ENCODE measurements at regions of chr9 and their contacts with region 1.

Region 1: DNA sequence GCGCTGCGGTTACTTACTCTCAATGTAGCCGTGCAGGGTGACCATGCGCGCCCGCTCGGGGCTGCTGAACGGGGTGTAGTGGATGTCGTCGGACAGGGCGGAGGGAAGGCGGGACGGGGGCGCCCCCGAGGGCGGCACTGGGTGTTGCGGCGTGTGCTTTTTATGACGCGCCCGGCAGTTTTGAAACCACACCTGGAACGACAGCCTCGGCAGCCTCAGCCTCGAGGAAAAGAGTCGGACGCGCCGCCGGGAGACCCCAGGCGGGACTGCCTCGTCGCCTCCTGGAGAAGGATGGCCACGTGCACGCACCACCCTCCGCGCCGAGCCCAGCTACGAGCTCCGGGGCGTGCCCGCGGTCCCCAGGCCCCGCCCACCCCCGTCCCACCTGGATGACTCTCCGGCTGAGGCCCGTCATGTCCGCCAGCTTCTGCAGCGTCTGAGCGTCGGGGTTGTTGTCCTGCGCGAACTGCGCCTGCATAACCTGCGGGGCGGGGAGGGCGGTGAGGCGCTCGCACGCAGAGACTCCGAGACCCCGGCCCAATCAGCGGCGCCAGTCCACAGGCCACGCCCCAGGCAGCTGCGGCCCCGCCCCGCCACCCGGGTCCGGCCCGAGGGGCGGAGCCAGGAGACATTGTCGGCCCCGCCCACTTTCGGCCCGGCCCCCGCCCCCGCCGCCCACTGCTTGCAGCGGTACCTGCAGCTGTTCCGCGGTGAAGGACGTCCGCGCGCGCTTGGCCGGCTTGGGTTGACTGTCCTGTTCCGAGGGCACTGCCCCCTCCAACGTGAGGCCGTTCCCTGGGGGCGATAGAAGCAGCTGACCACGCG is 15.0 kb downstream of the LHX6 start:
- DNase-seq: no peak
- H3K4me3 ChIP-seq: no peak overlapping the region
- CTCF ChIP-seq: no peak
- POLR2A ChIP-seq: no peak

Region 2: DNA sequence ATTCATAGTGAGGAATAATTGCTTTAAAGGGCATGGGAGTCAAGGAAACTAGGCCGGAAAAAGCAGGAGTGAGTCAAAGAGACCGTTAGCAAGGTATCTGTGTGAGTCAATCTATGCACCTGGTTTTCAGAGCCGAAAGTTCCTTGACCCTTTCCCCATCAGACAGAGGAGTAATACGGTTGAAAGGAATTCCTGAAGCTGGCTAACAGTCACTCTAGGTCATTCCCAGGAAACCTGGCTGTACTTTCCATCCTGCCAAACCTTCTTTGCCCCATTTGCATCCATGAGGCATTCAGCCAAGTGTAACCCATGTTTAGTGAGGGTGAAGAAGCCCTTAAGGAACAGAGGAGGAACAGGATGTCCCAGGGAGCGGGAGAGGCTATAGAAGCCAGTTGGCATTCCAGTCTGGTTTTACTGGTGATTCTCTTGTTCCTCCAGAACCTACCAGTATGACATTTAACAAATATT is 34.7 kb after region 1 on chr9:
- intact Hi-C with region 1: loop called (anchors 1 kb)
- DNase-seq: no peak
- H3K4me3 ChIP-seq: no peak overlapping the region
- CTCF ChIP-seq: no peak
- POLR2A ChIP-seq: no peak

Region 3: GRCh38 chr9:122302237-122303093 is 88.7 kb after region 1 on chr9:
- intact Hi-C with region 1: no loop called
- DNase-seq: no peak
- H3K4me3 ChIP-seq: no peak overlapping the region
- CTCF ChIP-seq: no peak
- POLR2A ChIP-seq: no peak

Measured in lower leg skin (tissue), 4 donors.